Dorsolateral prefrontal cortex (tissue), 120 donors: ENCODE measurements at regions of chr6 and their contacts with region 1.

Region 1: GRCh38 chr6:138001750-138002349 is 105.4 kb downstream of the PERP start:
- DNase-seq: peak in 7 of 10 donors; percentile 15 to 69 (median 44)
- H3K4me3 ChIP-seq: no peak overlapping the region
- H3K27ac ChIP-seq: no peak overlapping the region
- H3K27me3 ChIP-seq: peaks cover 0 to 5% (median 0%) of the 10 kb centered on the region in 45 donors
- CTCF ChIP-seq: peak; percentile 72 to 95 (median 88)

Region 2: GRCh38 chr6:137951064-137951597 is 50.7 kb before region 1 on chr6:
- intact Hi-C with region 1: no loop called
- DNase-seq: no peak
- H3K4me3 ChIP-seq: no peak overlapping the region
- H3K27ac ChIP-seq: no peak overlapping the region
- H3K27me3 ChIP-seq: peaks cover 0 to 6% (median 0%) of the 10 kb centered on the region in 45 donors
- CTCF ChIP-seq: peak in 1 of 56 donors; percentile 15

Region 3: GRCh38 chr6:138109042-138109997 is 107.5 kb after region 1 on chr6:
- intact Hi-C with region 1: loop called (anchors 2 to 5 kb)
- DNase-seq: peak in 9 of 10 donors; percentile 46 to 86 (median 69)
- H3K4me3 ChIP-seq: no peak overlapping the region
- H3K27ac ChIP-seq: no peak overlapping the region
- H3K27me3 ChIP-seq: peaks cover 0 to 27% (median 0%) of the 10 kb centered on the region in 45 donors
- CTCF ChIP-seq: peak; percentile 92 to 99 (median 97)

Region 4: GRCh38 chr6:138182939-138183789 is 181.3 kb after region 1 on chr6:
- intact Hi-C with region 1: no loop called
- DNase-seq: peak; percentile 43 to 90 (median 80)
- H3K4me3 ChIP-seq: peak overlapping the region in 47 of 59 donors; percentile 0 to 57 (median 26)
- H3K27ac ChIP-seq: peak overlapping the region; percentile 76 to 98 (median 94)
- H3K27me3 ChIP-seq: no peaks in the 10 kb centered on the region
- CTCF ChIP-seq: peak in 3 of 56 donors; percentile 9 to 24 (median 15)

Region 5: GRCh38 chr6:138287144-138287955 is 285.5 kb after region 1 on chr6:
- intact Hi-C with region 1: loop called in 1 of 2 experiments (anchors 10 kb)
- DNase-seq: peak in 1 of 10 donors; percentile 59
- H3K4me3 ChIP-seq: no peak overlapping the region
- H3K27ac ChIP-seq: peak overlapping the region in 10 of 59 donors; percentile 7 to 45 (median 27)
- H3K27me3 ChIP-seq: no peaks in the 10 kb centered on the region
- CTCF ChIP-seq: peak in 55 of 56 donors; percentile 25 to 73 (median 56)